ENCODE measurements at regions of chr22 and their contacts with region 1.

Region 1: GRCh38 chr22:35930933-35931332 is 97.7 kb downstream of the RBFOX2 start:
- DNase-seq: no peak

Region 2: GRCh38 chr22:35777335-35777975 is 153.5 kb before region 1 on chr22:
- intact Hi-C with region 1: no loop called
- DNase-seq: no peak

Region 3: GRCh38 chr22:35883031-35883620 is 47.8 kb before region 1 on chr22:
- intact Hi-C with region 1: no loop called
- DNase-seq: no peak

Region 4: GRCh38 chr22:36065775-36066559 is 135.0 kb after region 1 on chr22:
- intact Hi-C with region 1: loop called (anchors 2 kb)
- DNase-seq: peak; percentile 77 to 97 (median 85)

Region 5: DNA sequence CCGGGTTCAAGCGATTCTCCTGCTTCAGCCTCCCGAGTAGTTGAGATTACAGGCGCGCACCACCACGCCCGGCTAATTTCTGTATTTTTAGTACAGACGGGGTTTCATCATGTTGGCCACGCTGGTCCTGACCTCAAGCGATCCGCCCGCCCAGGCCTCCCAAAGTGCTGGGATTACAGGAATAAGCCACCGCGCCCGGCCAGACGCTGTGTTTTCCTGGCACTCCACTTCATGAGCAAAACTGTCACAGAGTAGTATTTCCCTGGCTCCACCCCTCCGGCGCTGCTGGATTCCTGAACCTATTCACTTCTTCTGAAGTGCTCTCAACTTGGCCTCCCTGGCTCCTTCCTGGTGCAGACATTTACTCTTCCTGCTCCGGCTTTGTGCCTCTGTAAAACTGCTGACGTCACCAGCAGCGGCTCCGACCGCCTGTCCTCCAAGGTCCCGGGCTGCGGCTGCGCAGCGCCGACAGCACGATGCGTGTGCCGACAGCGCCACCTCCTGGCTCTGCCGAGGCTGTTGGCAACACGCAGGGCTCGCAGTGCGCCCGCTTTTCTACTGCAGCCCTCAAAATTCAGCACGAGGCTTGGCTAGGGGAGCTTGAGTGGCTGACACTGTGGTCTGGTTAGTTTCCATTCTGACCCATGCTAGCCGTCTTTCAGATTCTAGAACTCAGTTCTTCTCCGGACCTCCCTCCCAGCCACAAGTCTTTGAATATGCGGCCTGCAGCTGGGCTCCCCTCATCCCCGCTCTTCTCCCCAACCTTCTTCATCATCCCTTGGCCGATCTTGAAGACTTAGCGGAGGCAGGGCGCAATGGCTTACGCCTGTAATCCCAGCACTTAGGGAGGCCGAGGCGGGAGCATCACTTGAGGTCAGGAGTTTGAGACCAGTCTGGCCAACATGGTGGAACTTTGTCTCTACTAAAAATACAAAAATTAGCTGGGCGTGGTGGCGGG is 193.0 kb after region 1 on chr22:
- intact Hi-C with region 1: loop called (anchors 1 kb)
- DNase-seq: peak; percentile 83 to 99 (median 90)

Measured in posterior cingulate gyrus (tissue), 11 donors.